Activated T-helper 2 cell treated with anti-CD3 and anti-CD28 coated beads, Interferon-gamma antibody, Interleukin-2, Interleukin-4, amounts not matched to agents 10 μg/mL and 5 μg/mL and 100 μg/mL, durations not matched to agents 14 hours and 24 hours and 36 hours (primary cell): ENCODE measurements at regions of chr5 and their contacts with region 1.

Region 1: GRCh38 chr5:148776780-148777179 is 49.6 kb upstream of the ADRB2 start:
- DNase-seq: no peak
- H3K4me3 Mint-ChIP-seq: no peak overlapping the region
- H3K27ac Mint-ChIP-seq: no peak overlapping the region
- H3K4me1 Mint-ChIP-seq: peaks cover 2% of the 10 kb centered on the region
- H3K27me3 Mint-ChIP-seq: peaks cover 33% of the 10 kb centered on the region

Region 2: GRCh38 chr5:148372893-148373292 is 403.9 kb before region 1 on chr5:
- intact Hi-C with region 1: no loop called
- DNase-seq: no peak
- H3K4me3 Mint-ChIP-seq: no peak overlapping the region
- H3K27ac Mint-ChIP-seq: no peak overlapping the region
- H3K4me1 Mint-ChIP-seq: peaks cover 3% of the 10 kb centered on the region
- H3K27me3 Mint-ChIP-seq: no peaks in the 10 kb centered on the region

Region 3: GRCh38 chr5:148816782-148817181 is 40.0 kb after region 1 on chr5:
- intact Hi-C with region 1: loop called (anchors 5 kb)
- DNase-seq: no peak
- H3K4me3 Mint-ChIP-seq: no peak overlapping the region
- H3K27ac Mint-ChIP-seq: no peak overlapping the region
- H3K4me1 Mint-ChIP-seq: peaks cover 13% of the 10 kb centered on the region
- H3K27me3 Mint-ChIP-seq: peaks cover 27% of the 10 kb centered on the region